H1 (cell line): ENCODE measurements at regions of chr16 and their contacts with region 1.

Region 1: GRCh38 chr16:30534368-30535105 is at the start of gene ZNF747:
- DNase-seq: peak; percentile 70 to 91
- H3K4me3 ChIP-seq: peak within 1 kb of the TSS; percentile 61 to 85 (median 70)
- H3K27ac ChIP-seq: peak within 1 kb of the TSS; percentile 94
- H3K4me1 ChIP-seq: peaks cover 0 to 8% (median 3%) of the 10 kb centered on the region in 4 experiments; a peak in 3 of 7 replicates
- H3K27me3 ChIP-seq: no peaks in the 10 kb centered on the region
- CTCF ChIP-seq: no peak
- EP300 ChIP-seq: no peak
- POLR2A ChIP-seq: peak in 1 of 2 experiments; percentile 81; a peak in 2 of 3 replicates
- RAD21 ChIP-seq: 0 out of 4 replicates have a peak, but pooled peaks of 1 of the 2 experiments have one; percentile 9
- total RNA-seq, gene ZNF747: 10.3 and 12.0 TPM in 2 replicates

Region 2: DNA sequence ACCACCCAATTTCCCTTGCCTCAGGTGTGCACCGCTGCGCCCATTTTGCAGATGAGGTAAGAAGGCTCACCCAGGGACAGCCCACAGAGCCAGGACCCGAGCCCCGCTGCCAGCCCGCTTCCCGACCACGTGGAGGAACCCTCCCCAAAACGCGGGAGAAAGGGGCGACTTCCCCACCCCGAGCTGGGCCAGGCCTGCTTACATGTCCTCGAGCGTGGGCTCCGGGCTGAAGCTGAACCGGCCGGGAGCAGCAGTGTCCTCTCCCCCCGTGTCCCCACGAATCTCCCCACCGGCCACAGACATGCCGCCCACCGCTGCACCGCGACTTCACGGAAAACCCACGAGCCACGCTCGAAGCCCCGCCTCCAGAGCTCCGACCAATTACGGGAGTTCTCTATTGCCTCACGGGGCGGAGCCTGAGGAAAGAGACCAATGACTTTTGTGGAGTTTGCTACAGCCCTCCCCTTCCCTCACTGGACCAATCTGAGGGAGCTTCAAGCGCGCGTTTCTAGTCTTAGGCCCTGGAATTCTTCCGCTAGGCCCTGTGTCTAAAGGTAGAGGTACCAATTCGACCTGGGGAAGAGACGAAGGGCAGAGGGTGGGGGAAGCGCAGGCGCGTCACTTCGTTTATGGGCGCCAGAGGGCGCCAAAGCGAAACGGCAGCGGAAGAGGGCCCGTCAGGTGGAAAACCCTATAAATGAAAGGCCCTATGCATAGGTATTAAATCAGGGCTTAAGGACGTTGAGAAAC is 104.7 kb before region 1 on chr16 and contains the start of gene DCTPP1:
- CTCF ChIA-PET with region 1: interaction called, 11 read pairs
- POLR2A ChIA-PET with region 1: interaction called, 15 read pairs
- DNase-seq: peak; percentile 87 to 96
- H3K4me3 ChIP-seq: peak within 1 kb of the TSS; percentile 63 to 85 (median 80)
- H3K27ac ChIP-seq: peak within 1 kb of the TSS; percentile 34; the same call in 1 of the 2 replicates
- H3K4me1 ChIP-seq: peaks cover 0 to 6% (median 4%) of the 10 kb centered on the region in 4 experiments; a peak in 4 of 7 replicates
- H3K27me3 ChIP-seq: no peaks in the 10 kb centered on the region
- CTCF ChIP-seq: peak; percentile 73 to 82 (median 74)
- EP300 ChIP-seq: peak in 1 of 2 experiments; percentile 55; a peak in 1 of 3 replicates
- POLR2A ChIP-seq: peak in 1 of 2 experiments; percentile 47; a peak in 1 of 3 replicates
- RAD21 ChIP-seq: peak; percentile 46 to 54
- total RNA-seq, gene DCTPP1: 90.4 and 94.5 TPM in 2 replicates

Region 3: GRCh38 chr16:30472328-30472942 is 62.1 kb before region 1 on chr16 and contains the start of gene ITGAL:
- CTCF ChIA-PET with region 1: no interaction called
- POLR2A ChIA-PET with region 1: no interaction called
- DNase-seq: no peak
- H3K4me3 ChIP-seq: no peak within 1 kb of the TSS
- H3K27ac ChIP-seq: no peak within 1 kb of the TSS
- H3K4me1 ChIP-seq: peaks cover 0 to 3% (median 0%) of the 10 kb centered on the region in 4 experiments; a peak in 1 of 7 replicates
- H3K27me3 ChIP-seq: peaks cover 0 to 2% (median 0%) of the 10 kb centered on the region in 4 experiments; a peak in 1 of 7 replicates
- CTCF ChIP-seq: no peak
- EP300 ChIP-seq: no peak
- POLR2A ChIP-seq: no peak
- RAD21 ChIP-seq: no peak
- total RNA-seq, gene ITGAL: not detected in 2 replicates

Region 4: DNA sequence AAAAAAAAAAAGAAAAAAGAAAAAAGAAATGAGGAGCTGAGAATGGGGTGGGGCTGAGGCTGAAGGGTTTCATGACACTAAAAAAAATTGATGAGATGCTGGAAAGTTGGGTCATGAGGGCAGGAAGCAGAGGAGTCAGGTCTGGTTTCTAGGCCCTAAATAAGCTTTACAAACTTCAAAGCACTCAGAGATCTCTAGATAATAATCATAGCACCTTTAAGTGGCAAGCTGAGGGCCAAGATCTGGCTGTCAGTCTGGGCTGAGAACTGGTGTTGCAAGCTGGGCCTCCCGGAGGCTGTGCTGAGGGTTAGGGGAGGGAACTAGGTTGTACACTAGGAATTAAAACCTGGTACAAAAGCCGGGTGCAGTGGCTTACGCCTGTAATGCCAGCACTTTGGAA is 17.2 kb after region 1 on chr16:
- CTCF ChIA-PET with region 1: interaction called, 25 read pairs
- POLR2A ChIA-PET with region 1: interaction called, 121 read pairs
- DNase-seq: no peak
- H3K4me3 ChIP-seq: no peak overlapping the region
- H3K27ac ChIP-seq: no peak overlapping the region
- H3K4me1 ChIP-seq: peaks cover 5 to 11% (median 6%) of the 10 kb centered on the region in 4 experiments
- H3K27me3 ChIP-seq: no peaks in the 10 kb centered on the region
- CTCF ChIP-seq: no peak
- EP300 ChIP-seq: no peak
- POLR2A ChIP-seq: no peak
- RAD21 ChIP-seq: no peak

Region 5: GRCh38 chr16:30571695-30572600 is 37.4 kb after region 1 on chr16 and contains the start of gene ZNF688:
- CTCF ChIA-PET with region 1: interaction called, 28 read pairs
- POLR2A ChIA-PET with region 1: interaction called, 26 read pairs
- DNase-seq: peak; percentile 90 to 91
- H3K4me3 ChIP-seq: peak within 1 kb of the TSS; percentile 78 to 89 (median 82)
- H3K27ac ChIP-seq: peak within 1 kb of the TSS; percentile 64; the same call in 1 of the 2 replicates
- H3K4me1 ChIP-seq: peaks cover 0 to 9% (median 2%) of the 10 kb centered on the region in 4 experiments; a peak in 5 of 7 replicates
- H3K27me3 ChIP-seq: no peaks in the 10 kb centered on the region
- CTCF ChIP-seq: no peak
- EP300 ChIP-seq: no peak
- POLR2A ChIP-seq: peak in 1 of 2 experiments; percentile 42
- RAD21 ChIP-seq: no peak
- total RNA-seq, gene ZNF688: 3.5 and 3.7 TPM in 2 replicates

Region 6: GRCh38 chr16:30602616-30603277 is 68.2 kb after region 1 on chr16:
- CTCF ChIA-PET with region 1: interaction called, 11 read pairs
- POLR2A ChIA-PET with region 1: interaction called, 9 read pairs
- DNase-seq: no peak
- H3K4me3 ChIP-seq: no peak overlapping the region
- H3K27ac ChIP-seq: no peak overlapping the region
- H3K4me1 ChIP-seq: no peaks in the 10 kb centered on the region
- H3K27me3 ChIP-seq: no peaks in the 10 kb centered on the region
- CTCF ChIP-seq: no peak
- EP300 ChIP-seq: no peak
- POLR2A ChIP-seq: no peak
- RAD21 ChIP-seq: no peak